Activated CD4-positive, alpha-beta T cell treated with anti-CD3 and anti-CD28 coated beads for 36 hours (primary cell): ENCODE measurements at regions of chr17 and their contacts with region 1.

Region 1: DNA sequence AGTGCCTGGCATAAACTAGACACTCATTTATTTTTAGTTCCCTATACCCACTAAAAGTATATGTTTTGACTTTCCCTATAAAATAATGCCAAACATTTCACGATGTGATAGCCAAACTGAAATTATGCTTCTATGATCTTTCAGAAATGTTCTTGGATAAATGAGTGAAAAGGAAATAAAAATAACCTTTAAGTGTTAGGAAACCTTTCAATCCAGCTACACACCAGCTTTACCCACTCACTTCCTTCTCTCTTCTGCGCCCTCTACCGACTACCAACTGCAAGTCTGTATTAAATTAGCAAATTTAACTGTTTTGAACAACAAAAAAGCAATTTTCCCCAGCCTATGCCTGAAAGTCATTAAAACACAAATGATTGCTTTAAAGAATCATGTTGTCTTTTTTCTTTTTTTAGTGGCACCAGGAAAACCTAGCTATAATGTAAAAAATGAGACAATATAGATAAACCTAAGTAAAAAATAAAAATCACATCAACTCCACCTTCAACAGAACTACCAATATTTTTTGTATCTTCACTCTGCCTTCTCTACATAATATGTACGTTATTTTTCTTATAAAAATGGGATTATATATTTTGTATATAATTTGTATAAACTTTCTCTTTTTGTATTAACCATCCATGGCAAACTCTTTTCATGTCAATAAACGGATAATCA is 13.2 kb upstream of the TMEM100 start:
- DNase-seq: peak; percentile 59
- ATAC-seq: no peak
- H3K4me3 Mint-ChIP-seq: no peak overlapping the region
- H3K27ac Mint-ChIP-seq: no peak overlapping the region
- H3K4me1 Mint-ChIP-seq: peaks cover 28% of the 10 kb centered on the region
- H3K27me3 Mint-ChIP-seq: peaks cover 38% of the 10 kb centered on the region

Region 2: DNA sequence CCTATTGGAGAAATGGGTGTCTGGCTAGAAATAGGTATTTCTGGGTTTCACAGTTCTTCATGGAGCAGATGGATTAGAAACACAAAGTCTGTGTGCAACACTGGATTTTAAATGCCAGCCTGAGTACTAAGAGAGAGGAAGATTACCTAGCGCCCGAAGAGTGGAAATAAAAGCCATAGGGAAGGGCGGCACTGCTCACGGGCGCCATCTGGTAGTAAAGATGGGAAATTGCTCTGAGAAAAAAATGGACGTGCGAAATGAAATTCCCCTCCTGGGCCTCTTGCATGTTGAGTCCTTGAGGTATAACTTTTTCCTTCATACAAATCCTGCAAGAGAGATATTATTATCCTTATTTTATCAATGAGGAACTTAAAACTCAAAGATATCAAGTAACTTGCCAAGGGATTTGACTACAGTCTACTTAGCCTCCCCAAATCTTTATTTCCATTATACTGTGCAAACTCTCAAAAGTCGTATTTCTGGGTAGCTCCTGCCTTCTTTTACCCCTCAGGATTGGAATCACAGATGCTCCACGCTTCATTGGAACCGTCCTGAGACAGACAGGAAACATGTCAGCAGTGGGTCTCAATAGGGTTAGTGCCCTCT is 387.0 kb before region 1 on chr17:
- CTCF ChIA-PET with region 1: no interaction called
- POLR2A ChIA-PET with region 1: no interaction called
- intact Hi-C with region 1: loop called in 1 of 2 experiments (anchors 10 kb)
- DNase-seq: peak; percentile 64
- ATAC-seq: no peak
- H3K4me3 Mint-ChIP-seq: no peak overlapping the region
- H3K27ac Mint-ChIP-seq: no peak overlapping the region
- H3K4me1 Mint-ChIP-seq: peaks cover 11% of the 10 kb centered on the region
- H3K27me3 Mint-ChIP-seq: peaks cover 3% of the 10 kb centered on the region

Region 3: DNA sequence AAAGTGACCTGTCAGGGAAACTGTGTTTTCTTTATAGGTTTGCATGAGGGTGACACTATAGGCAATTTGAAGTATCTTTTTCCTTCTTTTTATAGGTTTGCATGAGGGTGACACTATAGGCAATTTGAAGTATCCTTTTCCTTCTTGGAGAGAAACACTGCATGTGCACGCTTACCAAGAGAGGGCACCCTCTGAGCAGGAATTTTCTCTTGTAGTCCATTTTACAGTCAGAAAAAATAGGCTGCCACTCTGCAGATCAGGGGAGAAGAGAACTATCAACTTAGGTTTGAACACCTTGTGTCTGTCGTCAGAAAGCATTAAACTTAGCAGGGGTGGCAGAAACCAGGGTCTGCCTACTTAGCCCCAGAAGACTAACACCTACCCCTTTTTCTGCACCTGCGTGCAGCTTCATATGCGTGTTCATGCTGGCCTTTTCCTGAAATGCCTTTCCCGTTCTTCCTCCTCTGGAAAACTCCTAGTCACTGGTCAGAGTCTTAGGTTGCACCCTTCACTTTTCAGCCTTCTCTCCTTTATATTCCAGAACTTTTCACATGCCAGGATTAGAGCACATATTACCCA is 208.2 kb before region 1 on chr17:
- CTCF ChIA-PET with region 1: interaction called, 7 read pairs
- POLR2A ChIA-PET with region 1: no interaction called
- intact Hi-C with region 1: loop called in 1 of 2 experiments (anchors 5 kb)
- DNase-seq: peak; percentile 48
- ATAC-seq: no peak
- H3K4me3 Mint-ChIP-seq: no peak overlapping the region
- H3K27ac Mint-ChIP-seq: no peak overlapping the region
- H3K4me1 Mint-ChIP-seq: peaks cover 5% of the 10 kb centered on the region
- H3K27me3 Mint-ChIP-seq: peaks cover 20% of the 10 kb centered on the region

Region 4: DNA sequence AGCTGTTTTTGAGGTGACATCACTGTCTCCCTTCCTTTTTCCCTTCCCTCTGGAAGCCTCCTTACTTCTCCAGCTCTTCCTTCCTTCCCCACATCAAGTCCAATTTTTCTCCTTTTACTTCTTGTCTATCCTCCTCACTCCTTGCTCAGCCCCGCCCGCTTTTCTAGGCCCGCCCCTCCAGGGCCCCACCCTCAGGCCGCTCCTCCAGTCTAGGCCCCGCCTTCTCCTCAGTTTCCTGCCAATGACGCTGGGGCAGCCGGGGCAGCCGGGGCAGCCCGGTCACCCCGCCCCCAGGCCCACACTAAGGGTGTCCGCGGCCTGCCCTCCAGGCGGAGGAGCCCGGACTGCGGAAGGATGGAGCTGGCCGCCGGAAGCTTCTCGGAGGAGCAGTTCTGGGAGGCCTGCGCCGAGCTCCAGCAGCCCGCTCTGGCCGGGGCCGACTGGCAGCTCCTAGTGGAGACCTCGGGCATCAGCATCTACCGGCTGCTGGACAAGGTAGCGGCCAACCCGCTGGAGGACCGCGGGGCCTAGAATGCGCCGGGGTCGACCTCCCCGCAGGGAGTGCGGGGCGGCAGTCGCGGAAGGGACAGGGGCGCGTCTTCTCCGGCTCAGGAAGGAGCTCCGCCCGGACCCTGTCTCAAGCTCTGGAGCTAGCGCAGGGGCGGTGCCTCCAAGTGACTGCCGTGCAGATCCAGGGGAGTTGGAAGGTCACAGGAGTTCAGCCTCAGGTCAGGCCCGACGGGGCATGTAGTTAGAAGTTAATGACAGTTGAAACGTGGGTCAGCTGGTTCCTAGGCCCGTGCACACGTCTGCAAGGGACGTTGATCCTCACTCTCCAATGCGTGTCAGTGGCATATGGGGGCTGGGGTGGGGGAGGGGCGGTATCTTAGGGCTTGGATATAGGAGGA is 15.1 kb after region 1 on chr17 and contains the start of gene PCTP:
- CTCF ChIA-PET with region 1: interaction called, 29 read pairs
- POLR2A ChIA-PET with region 1: interaction called, 3 read pairs
- intact Hi-C with region 1: loop called in 1 of 2 experiments (anchors 1 kb)
- DNase-seq: peak; percentile 93
- ATAC-seq: peak; percentile 99
- H3K4me3 Mint-ChIP-seq: peak within 1 kb of the TSS; percentile 77
- H3K27ac Mint-ChIP-seq: peak within 1 kb of the TSS; percentile 44
- H3K4me1 Mint-ChIP-seq: peaks cover 11% of the 10 kb centered on the region
- H3K27me3 Mint-ChIP-seq: peaks cover 26% of the 10 kb centered on the region
- total RNA-seq, gene PCTP: 7.6 to 8.1 TPM

Region 5: GRCh38 chr17:56020369-56020768 is 284.5 kb after region 1 on chr17:
- CTCF ChIA-PET with region 1: no interaction called
- POLR2A ChIA-PET with region 1: no interaction called
- intact Hi-C with region 1: loop called in 1 of 2 experiments (anchors 5 kb)
- DNase-seq: no peak
- ATAC-seq: peak; percentile 80
- H3K4me3 Mint-ChIP-seq: no peak overlapping the region
- H3K27ac Mint-ChIP-seq: peak overlapping the region; percentile 48
- H3K4me1 Mint-ChIP-seq: peaks cover 40% of the 10 kb centered on the region
- H3K27me3 Mint-ChIP-seq: peaks cover 9% of the 10 kb centered on the region